OCI-LY7 (cell line): ENCODE measurements at regions of chr20 and their contacts with region 1.

Region 1: DNA sequence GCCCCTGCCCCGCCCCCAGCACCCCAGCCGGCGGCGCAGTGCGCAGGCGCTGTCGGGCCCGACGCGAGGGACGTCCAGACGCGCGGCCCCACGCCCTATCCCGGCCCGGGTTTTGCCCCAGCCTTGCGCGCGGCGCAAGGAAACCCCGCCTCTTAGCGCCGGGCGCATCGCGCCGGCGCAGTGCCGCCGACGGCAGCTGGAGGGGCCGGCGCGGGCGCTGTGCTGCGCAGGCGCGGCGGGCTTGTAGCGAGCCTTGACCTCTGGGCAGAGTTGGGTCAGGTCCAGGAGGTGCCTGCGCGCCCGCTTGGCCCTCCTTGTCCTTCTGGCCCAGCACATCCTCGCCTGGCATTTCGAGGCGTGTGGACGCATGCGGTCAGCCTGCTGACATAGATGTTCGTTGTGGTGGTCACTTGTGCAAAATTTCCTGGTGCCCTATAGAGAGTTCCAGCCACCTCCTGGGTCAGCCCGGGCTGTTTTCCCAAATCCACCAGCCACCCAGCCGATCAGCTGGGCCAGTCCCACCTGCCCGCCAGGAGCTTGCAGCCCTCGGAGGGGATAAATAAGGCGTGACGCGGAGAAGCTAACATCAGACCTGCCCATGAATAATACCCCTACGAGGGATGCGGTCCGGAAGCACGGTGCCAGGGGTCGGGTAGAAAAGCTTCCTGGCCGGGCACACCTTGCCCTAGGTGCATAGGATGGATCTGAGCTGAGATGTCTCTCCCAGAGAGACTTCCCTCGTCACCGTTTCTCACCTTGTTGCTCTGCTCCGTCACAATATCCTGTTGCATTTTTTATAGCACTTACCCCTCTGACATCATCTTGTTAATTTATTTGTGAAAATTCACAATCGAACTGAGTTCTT is 442 bp upstream of the PRELID3B start:
- DNase-seq: peak; percentile 96
- H3K4me3 ChIP-seq: peak overlapping the region; percentile 86
- H3K27ac ChIP-seq: peak overlapping the region; percentile 77
- H3K4me1 ChIP-seq: peaks cover 58% of the 10 kb centered on the region
- CTCF ChIP-seq: no peak

Region 2: GRCh38 chr20:58650776-58651558 is 392.1 kb before region 1 on chr20 and contains the start of gene STX16:
- CTCF ChIA-PET with region 1: no interaction called
- POLR2A ChIA-PET with region 1: no interaction called
- intact Hi-C with region 1: loop called (anchors 10 kb)
- DNase-seq: peak; percentile 94
- H3K4me3 ChIP-seq: peak within 1 kb of the TSS; percentile 98
- H3K27ac ChIP-seq: peak within 1 kb of the TSS; percentile 74
- H3K4me1 ChIP-seq: peaks cover 42% of the 10 kb centered on the region
- CTCF ChIP-seq: peak; percentile 88
- total RNA-seq, gene STX16: 48.2 and 50.5 TPM in 2 replicates

Region 3: GRCh38 chr20:58890518-58891085 is 152.4 kb before region 1 on chr20:
- CTCF ChIA-PET with region 1: no interaction called
- POLR2A ChIA-PET with region 1: interaction called, 6 read pairs
- intact Hi-C with region 1: loop called (anchors 2 kb)
- DNase-seq: peak; percentile 85
- H3K4me3 ChIP-seq: peak overlapping the region; percentile 90
- H3K27ac ChIP-seq: peak overlapping the region; percentile 84
- H3K4me1 ChIP-seq: peaks cover 58% of the 10 kb centered on the region
- CTCF ChIP-seq: no peak

Region 4: GRCh38 chr20:58907399-58908137 is 135.5 kb before region 1 on chr20:
- CTCF ChIA-PET with region 1: no interaction called
- POLR2A ChIA-PET with region 1: interaction called, 13 read pairs
- intact Hi-C with region 1: no loop called
- DNase-seq: peak; percentile 98
- H3K4me3 ChIP-seq: peak overlapping the region; percentile 60
- H3K27ac ChIP-seq: peak overlapping the region; percentile 98
- H3K4me1 ChIP-seq: peaks cover 40% of the 10 kb centered on the region
- CTCF ChIP-seq: no peak

Region 5: DNA sequence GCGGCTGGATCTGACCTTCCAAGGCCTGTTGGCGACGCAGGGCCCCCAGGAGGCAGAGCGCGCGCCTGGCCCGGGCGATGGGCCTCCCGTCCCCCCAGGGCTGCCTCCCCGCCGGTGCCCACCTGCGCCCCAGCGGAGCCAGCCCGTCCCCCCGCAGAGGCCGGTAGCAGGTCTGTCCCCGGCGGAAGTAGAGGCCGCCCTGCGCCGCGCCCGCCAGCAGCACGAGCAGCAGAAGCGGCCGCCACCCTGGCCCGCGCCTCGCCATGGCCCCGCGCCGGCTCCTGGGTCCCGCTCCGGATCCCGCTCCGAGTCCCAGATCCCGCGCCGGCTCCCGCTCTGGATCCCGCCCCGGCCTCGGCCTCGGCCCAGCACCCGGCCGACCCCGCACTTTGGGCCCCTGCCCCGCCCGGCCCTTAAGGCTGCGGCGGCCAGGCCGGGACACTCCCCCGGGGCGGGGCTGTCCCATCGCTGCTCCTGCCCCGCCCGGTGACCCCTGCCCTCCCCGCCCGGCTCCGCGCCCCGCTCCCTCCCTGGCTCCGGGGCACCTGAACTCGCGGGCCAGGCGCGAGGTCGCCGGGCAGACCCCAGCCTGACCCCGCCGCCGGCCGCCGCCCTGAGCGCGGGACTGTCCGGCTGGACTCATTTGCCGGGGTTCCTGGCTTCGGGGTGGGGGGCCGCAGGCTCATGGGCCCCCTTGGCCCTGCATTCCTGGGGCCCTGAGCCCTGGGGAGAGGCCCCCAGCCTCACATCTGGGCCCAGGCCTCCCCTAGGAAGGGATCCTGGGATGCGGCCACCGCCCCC is 36.0 kb before region 1 on chr20 and contains the start of gene CTSZ:
- CTCF ChIA-PET with region 1: no interaction called
- POLR2A ChIA-PET with region 1: interaction called, 5 read pairs
- intact Hi-C with region 1: loop called (anchors 2 kb)
- DNase-seq: peak; percentile 53
- H3K4me3 ChIP-seq: peak within 1 kb of the TSS; percentile 74
- H3K27ac ChIP-seq: peak within 1 kb of the TSS; percentile 85
- H3K4me1 ChIP-seq: peaks cover 70% of the 10 kb centered on the region
- CTCF ChIP-seq: no peak
- total RNA-seq, gene CTSZ: 47.2 and 50.5 TPM in 2 replicates

Region 6: DNA sequence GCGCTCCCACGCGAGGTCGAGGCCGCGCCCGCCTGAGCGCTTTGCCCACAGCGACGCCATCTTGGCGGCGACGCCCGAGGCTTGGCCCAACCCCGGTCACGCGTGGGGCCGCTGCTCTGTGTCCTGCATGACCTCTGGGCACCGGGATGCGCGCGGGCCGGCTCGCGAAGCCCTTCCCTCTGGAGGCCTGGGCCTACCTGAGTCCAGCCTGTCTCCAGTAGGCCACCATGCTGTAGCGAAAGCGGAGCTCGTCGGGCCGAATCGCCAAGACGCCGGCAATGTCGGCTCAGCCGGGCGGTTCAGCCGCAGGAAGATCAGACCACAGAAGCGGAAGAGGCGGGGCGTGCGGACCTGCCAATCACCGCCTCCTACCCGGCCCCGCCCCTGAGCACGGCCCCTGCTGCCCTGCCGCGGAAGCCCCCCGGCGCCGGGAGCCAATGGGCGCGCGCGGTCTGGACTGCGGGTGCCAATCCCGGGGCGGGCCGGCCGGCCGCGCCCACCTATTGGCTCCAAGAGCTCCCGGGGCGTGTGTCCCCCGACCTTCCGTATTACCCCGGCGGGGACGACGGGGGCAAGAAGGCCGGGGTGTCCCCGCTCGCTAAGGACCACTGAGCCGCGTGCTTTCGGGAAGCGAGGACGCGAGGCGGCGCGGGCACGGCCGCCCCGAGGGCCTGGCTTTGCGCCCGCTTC is 10.9 kb before region 1 on chr20 and contains the start of gene ATP5F1E:
- CTCF ChIA-PET with region 1: no interaction called
- POLR2A ChIA-PET with region 1: interaction called, 32 read pairs
- intact Hi-C with region 1: no loop called
- DNase-seq: peak; percentile 97
- H3K4me3 ChIP-seq: peak within 1 kb of the TSS; percentile 76
- H3K27ac ChIP-seq: peak within 1 kb of the TSS; percentile 72
- H3K4me1 ChIP-seq: peaks cover 49% of the 10 kb centered on the region
- CTCF ChIP-seq: no peak
- total RNA-seq, gene ATP5F1E: 36.7 and 42.4 TPM in 2 replicates

Region 7: GRCh38 chr20:59165891-59166709 is 123.1 kb after region 1 on chr20:
- CTCF ChIA-PET with region 1: no interaction called
- POLR2A ChIA-PET with region 1: interaction called, 5 read pairs
- intact Hi-C with region 1: loop called (anchors 5 kb)
- DNase-seq: peak; percentile 38
- H3K4me3 ChIP-seq: peak overlapping the region; percentile 72
- H3K27ac ChIP-seq: peak overlapping the region; percentile 86
- H3K4me1 ChIP-seq: peaks cover 64% of the 10 kb centered on the region
- CTCF ChIP-seq: no peak

Region 8: DNA sequence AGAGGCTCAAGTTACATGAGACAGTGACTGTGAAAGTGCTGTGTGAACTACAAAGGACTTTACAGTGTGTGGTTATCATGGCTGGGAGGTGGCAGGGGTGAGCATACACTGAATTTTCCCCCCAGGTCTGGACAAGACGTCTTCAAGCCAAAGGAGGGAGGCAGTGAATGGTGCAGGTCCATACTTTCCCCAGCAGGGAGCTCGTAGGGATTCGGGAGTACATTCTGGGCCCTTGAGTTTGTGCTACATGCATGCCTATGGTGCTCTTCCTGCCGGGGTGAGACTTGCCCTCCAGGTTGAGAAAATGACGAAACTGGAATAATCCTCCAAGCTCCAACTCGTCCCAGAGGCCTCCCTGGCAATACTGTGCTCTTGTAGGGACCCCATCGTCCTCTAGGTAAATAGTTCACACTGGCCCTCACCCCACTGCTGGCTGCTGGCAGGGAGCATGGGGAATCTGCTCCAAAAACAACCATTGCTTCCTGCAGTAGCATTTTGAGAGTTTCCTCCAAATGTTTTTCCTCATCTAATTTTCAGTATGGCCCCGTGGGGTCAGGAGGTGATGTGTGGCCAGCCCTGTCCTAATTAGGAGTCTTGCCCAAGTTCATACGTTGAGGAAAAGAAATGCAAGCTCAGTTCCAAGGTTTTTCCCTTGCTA is 178.2 kb after region 1 on chr20:
- CTCF ChIA-PET with region 1: no interaction called
- POLR2A ChIA-PET with region 1: no interaction called
- intact Hi-C with region 1: no loop called
- DNase-seq: no peak
- H3K4me3 ChIP-seq: no peak overlapping the region
- H3K27ac ChIP-seq: no peak overlapping the region
- H3K4me1 ChIP-seq: no peaks in the 10 kb centered on the region
- CTCF ChIP-seq: no peak

Region 9: GRCh38 chr20:59269411-59270025 is 226.5 kb after region 1 on chr20:
- CTCF ChIA-PET with region 1: no interaction called
- POLR2A ChIA-PET with region 1: no interaction called
- intact Hi-C with region 1: no loop called
- DNase-seq: no peak
- H3K4me3 ChIP-seq: no peak overlapping the region
- H3K27ac ChIP-seq: no peak overlapping the region
- H3K4me1 ChIP-seq: peaks cover 3% of the 10 kb centered on the region
- CTCF ChIP-seq: no peak